ENCODE measurements at regions of chr6 and their contacts with region 1.

Region 1: GRCh38 chr6:78324213-78324612 is 543.1 kb upstream of the IRAK1BP1 start:
- DNase-seq: no peak
- ATAC-seq: no peak
- H3K4me3 ChIP-seq: no peak overlapping the region
- H3K27ac ChIP-seq: no peak overlapping the region
- H3K4me1 ChIP-seq: no peaks in the 10 kb centered on the region
- H3K27me3 ChIP-seq: no peaks in the 10 kb centered on the region
- CTCF ChIP-seq: no peak

Region 2: DNA sequence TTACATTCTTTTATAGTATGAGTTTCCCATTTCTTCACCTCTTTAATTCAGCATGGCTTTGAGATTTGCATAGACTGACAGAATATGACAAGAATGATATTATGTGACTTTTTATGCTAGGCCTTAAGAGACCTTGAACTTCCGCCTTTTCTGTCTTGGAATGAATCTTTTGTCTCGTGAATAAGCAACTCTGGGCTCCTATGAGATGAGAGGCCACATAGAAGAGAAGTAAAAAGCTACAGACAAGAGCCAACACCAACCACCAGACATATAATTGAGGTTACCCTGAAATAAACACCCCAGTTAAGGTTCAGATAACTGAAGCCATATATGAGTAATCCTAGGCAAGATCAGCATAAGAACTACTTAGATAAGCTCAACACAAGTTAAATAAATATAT is 70.6 kb before region 1 on chr6:
- intact Hi-C with region 1: loop called in 1 of 10 experiments (anchors 2 kb)
- DNase-seq: no peak
- ATAC-seq: no peak
- H3K4me3 ChIP-seq: no peak overlapping the region
- H3K27ac ChIP-seq: no peak overlapping the region
- H3K4me1 ChIP-seq: no peaks in the 10 kb centered on the region
- H3K27me3 ChIP-seq: no peaks in the 10 kb centered on the region
- CTCF ChIP-seq: no peak

Region 3: DNA sequence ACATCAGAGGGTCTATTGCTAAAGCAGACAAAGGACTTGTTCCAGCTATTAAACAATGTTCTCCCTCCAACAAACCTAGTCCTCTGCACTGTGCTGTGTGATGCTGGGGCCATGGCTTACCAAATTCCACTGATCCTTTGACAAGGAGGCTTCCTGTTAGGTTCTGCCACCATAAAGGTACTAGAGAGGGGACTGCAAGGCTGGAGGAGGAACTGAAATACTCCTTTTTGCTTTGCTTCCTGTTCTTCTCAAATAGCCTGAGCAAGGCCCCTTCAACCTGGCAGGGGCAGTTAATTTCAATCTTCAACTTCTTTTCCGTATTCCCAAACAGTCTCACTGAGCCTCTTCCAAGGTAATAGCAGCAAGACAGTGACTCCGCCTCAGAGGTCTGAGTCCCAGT is 256.7 kb after region 1 on chr6:
- intact Hi-C with region 1: no loop called
- DNase-seq: no peak
- ATAC-seq: no peak
- H3K4me3 ChIP-seq: no peak overlapping the region
- H3K27ac ChIP-seq: no peak overlapping the region
- H3K4me1 ChIP-seq: no peaks in the 10 kb centered on the region
- H3K27me3 ChIP-seq: no peaks in the 10 kb centered on the region
- CTCF ChIP-seq: no peak

Measured in heart right ventricle (tissue), 16 donors.